HepG2 (cell line): ENCODE measurements at regions of chr17 and their contacts with region 1.

Region 1: GRCh38 chr17:4908301-4908700 is 5.4 kb upstream of the CHRNE start:
- DNase-seq: peak; percentile 77
- ATAC-seq: peak; percentile 85
- H3K4me3 ChIP-seq: peak overlapping the region; percentile 44 to 71 (median 45)
- H3K27ac ChIP-seq: peak overlapping the region; percentile 43
- H3K4me1 ChIP-seq: peaks cover 71% of the 10 kb centered on the region
- H3K27me3 ChIP-seq: no peaks in the 10 kb centered on the region
- CTCF ChIP-seq: peak; percentile 16; the same call in 1 of the 2 replicates
- EP300 ChIP-seq: peak in 1 of 2 experiments; percentile 5; a peak in 1 of 4 replicates
- POLR2A ChIP-seq: peak; percentile 39 to 76; a peak in 3 of 4 replicates
- RAD21 ChIP-seq: 0 out of 2 replicates have a peak, but pooled peaks have one; percentile 6

Region 2: GRCh38 chr17:4881761-4882555 is 26.3 kb before region 1 on chr17:
- CTCF ChIA-PET with region 1: no interaction called
- POLR2A ChIA-PET with region 1: no interaction called
- in situ Hi-C with region 1: no loop called
- intact Hi-C with region 1: no loop called
- DNase-seq: peak; percentile 41
- ATAC-seq: peak; percentile 90
- H3K4me3 ChIP-seq: no peak overlapping the region
- H3K27ac ChIP-seq: no peak overlapping the region
- H3K4me1 ChIP-seq: no peaks in the 10 kb centered on the region
- H3K27me3 ChIP-seq: no peaks in the 10 kb centered on the region
- CTCF ChIP-seq: peak; percentile 88
- EP300 ChIP-seq: no peak
- POLR2A ChIP-seq: no peak
- RAD21 ChIP-seq: peak; percentile 84

Region 3: DNA sequence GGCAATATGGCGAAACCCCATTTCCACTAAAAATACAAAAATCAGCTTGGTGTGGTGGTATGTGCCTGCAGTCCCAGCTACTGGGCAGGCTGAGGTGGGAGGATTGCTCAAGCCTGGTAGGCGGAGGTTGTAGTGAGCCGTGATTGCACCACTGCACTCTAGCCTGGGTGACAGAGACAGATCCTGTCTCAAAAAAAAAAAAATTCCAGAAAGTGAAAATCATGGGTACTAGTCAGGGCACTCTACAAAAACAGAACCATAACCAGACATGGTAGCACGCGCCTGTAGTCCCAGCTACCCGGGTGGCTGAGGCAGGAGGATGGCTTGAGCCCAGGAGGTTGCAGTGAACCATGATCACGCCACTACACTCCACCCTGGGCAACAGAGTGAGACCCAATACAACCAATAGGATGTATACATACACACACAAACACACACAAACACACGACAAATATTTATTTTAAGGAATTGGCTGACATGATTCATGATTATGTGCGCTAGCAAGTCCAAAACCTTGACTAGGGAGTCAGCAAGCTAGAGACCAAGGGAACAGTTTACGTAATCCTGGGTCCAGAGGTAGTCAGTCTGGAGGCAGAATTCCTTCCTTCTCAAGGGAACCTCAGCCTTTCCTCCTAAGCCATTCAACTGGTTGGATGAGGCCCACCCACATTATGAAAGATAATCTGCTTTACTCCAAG is 12.2 kb after region 1 on chr17:
- CTCF ChIA-PET with region 1: no interaction called
- POLR2A ChIA-PET with region 1: interaction called, 30 read pairs
- in situ Hi-C with region 1: no loop called
- intact Hi-C with region 1: no loop called
- DNase-seq: peak; percentile 65
- ATAC-seq: peak; percentile 95
- H3K4me3 ChIP-seq: peak overlapping the region; percentile 14 to 57 (median 26)
- H3K27ac ChIP-seq: peak overlapping the region; percentile 53
- H3K4me1 ChIP-seq: peaks cover 22% of the 10 kb centered on the region
- H3K27me3 ChIP-seq: no peaks in the 10 kb centered on the region
- CTCF ChIP-seq: no peak
- EP300 ChIP-seq: no peak
- POLR2A ChIP-seq: peak in 1 of 2 experiments; percentile 14; a peak in 1 of 4 replicates
- RAD21 ChIP-seq: no peak

Region 4: GRCh38 chr17:4934173-4934979 is 26.1 kb after region 1 on chr17:
- CTCF ChIA-PET with region 1: interaction called, 10 read pairs
- POLR2A ChIA-PET with region 1: interaction called, 58 read pairs
- in situ Hi-C with region 1: no loop called
- intact Hi-C with region 1: loop called (anchors 1 kb)
- DNase-seq: peak; percentile 46
- ATAC-seq: peak; percentile 91
- H3K4me3 ChIP-seq: peak overlapping the region in 2 of 3 experiments; percentile 31 to 46; a peak in 2 of 6 replicates
- H3K27ac ChIP-seq: no peak overlapping the region
- H3K4me1 ChIP-seq: peaks cover 22% of the 10 kb centered on the region
- H3K27me3 ChIP-seq: no peaks in the 10 kb centered on the region
- CTCF ChIP-seq: peak; percentile 79
- EP300 ChIP-seq: no peak
- POLR2A ChIP-seq: peak in 1 of 2 experiments; percentile 64; a peak in 2 of 4 replicates
- RAD21 ChIP-seq: peak; percentile 62; the same call in 1 of the 2 replicates

Region 5: GRCh38 chr17:4939796-4940624 is 31.7 kb after region 1 on chr17 and contains the starts of genes RNF167 and SLC25A11:
- CTCF ChIA-PET with region 1: interaction called, 10 read pairs
- POLR2A ChIA-PET with region 1: interaction called, 58 read pairs
- in situ Hi-C with region 1: no loop called
- intact Hi-C with region 1: no loop called
- DNase-seq: peak; percentile 100
- ATAC-seq: peak; percentile 79
- H3K4me3 ChIP-seq: peak within 1 kb of the TSS; percentile 91 to 97 (median 93)
- H3K27ac ChIP-seq: peak within 1 kb of the TSS; percentile 96
- H3K4me1 ChIP-seq: peaks cover 30% of the 10 kb centered on the region
- H3K27me3 ChIP-seq: no peaks in the 10 kb centered on the region; a peak in 1 of 5 replicates
- CTCF ChIP-seq: no peak
- EP300 ChIP-seq: no peak
- POLR2A ChIP-seq: peak; percentile 67 to 90
- RAD21 ChIP-seq: peak; percentile 57
- total RNA-seq, gene RNF167: 35.7 and 44.1 TPM in 2 replicates
- total RNA-seq, gene SLC25A11: 47.2 and 47.9 TPM in 2 replicates

Region 6: GRCh38 chr17:4948931-4949320 is 40.6 kb after region 1 on chr17:
- CTCF ChIA-PET with region 1: no interaction called
- POLR2A ChIA-PET with region 1: interaction called, 12 read pairs
- in situ Hi-C with region 1: no loop called
- intact Hi-C with region 1: loop called (anchors 5 kb)
- DNase-seq: peak; percentile 82
- ATAC-seq: peak; percentile 62
- H3K4me3 ChIP-seq: peak overlapping the region; percentile 70 to 100 (median 93)
- H3K27ac ChIP-seq: peak overlapping the region; percentile 99
- H3K4me1 ChIP-seq: peaks cover 59% of the 10 kb centered on the region
- H3K27me3 ChIP-seq: no peaks in the 10 kb centered on the region; a peak in 1 of 5 replicates
- CTCF ChIP-seq: no peak
- EP300 ChIP-seq: no peak
- POLR2A ChIP-seq: peak; percentile 50 to 64; a peak in 3 of 4 replicates
- RAD21 ChIP-seq: peak; percentile 30

Region 7: GRCh38 chr17:4974115-4974670 is 65.9 kb after region 1 on chr17:
- CTCF ChIA-PET with region 1: interaction called, 3 read pairs
- POLR2A ChIA-PET with region 1: interaction called, 103 read pairs
- in situ Hi-C with region 1: no loop called
- intact Hi-C with region 1: loop called (anchors 5 kb)
- DNase-seq: no peak
- ATAC-seq: no peak
- H3K4me3 ChIP-seq: no peak overlapping the region
- H3K27ac ChIP-seq: no peak overlapping the region
- H3K4me1 ChIP-seq: peaks cover 27% of the 10 kb centered on the region
- H3K27me3 ChIP-seq: no peaks in the 10 kb centered on the region
- CTCF ChIP-seq: no peak
- EP300 ChIP-seq: no peak
- POLR2A ChIP-seq: no peak; a peak in 1 of 4 replicates
- RAD21 ChIP-seq: no peak